ENCODE measurements at regions of chr11 and their contacts with region 1.

Region 1: DNA sequence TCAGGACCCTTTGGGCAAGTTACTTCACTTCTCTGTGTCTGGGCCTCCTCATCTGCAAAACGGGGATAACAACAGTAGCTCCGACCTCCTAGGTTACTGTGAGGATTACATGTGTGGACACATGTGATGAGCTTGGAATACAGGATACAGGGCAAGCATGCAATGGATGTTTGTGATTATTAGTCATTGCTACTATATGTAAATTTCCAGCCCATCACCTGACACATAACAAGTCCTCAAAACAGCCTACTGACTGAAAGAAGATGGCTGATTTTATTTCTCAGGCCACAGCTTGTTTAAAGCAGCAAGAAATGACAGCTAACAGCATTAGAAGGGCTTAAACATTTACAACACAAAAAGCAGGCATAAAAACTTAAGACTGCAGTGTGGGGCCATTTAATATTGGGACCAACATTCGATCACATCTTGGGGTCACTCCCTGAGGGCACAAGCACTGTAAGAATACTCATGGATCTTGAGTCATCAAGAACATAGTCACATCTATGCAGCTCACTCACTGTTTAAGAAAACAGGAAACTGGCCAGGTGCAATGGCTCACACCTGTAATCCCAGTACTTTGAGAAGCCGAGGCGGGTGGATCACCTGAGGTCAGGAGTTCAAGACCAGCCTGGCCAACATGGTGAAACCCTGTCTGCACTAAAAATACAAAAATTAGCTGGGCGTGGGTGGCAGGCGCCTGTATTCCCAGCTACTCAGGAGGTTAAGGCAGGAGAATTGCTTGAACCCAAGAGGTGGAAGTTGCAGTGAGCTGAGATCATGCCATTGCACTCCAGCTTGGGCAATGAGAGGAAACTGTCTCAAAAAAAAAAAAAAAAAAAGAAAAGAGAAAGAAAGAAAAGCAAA is 49.5 kb downstream of the ABTB2 start:
- DNase-seq: no peak
- ATAC-seq: no peak
- H3K4me3 ChIP-seq: no peak overlapping the region
- H3K27ac ChIP-seq: no peak overlapping the region
- H3K4me1 ChIP-seq: peaks cover 29% of the 10 kb centered on the region
- CTCF ChIP-seq: no peak
- EP300 ChIP-seq: no peak
- POLR2A ChIP-seq: no peak
- RAD21 ChIP-seq: no peak

Region 2: GRCh38 chr11:33875621-33876294 is 432.5 kb before region 1 on chr11:
- CTCF ChIA-PET with region 1: no interaction called
- POLR2A ChIA-PET with region 1: interaction called, 10 read pairs
- DNase-seq: no peak
- ATAC-seq: no peak
- H3K4me3 ChIP-seq: no peak overlapping the region
- H3K27ac ChIP-seq: no peak overlapping the region
- H3K4me1 ChIP-seq: no peaks in the 10 kb centered on the region
- CTCF ChIP-seq: no peak
- EP300 ChIP-seq: no peak
- POLR2A ChIP-seq: no peak
- RAD21 ChIP-seq: no peak

Measured in A549 (cell line).